Activated CD4-positive, alpha-beta memory T cell treated with anti-CD3 and anti-CD28 coated beads for 36 hours (primary cell): ENCODE measurements at regions of chr1 and their contacts with region 1.

Region 1: GRCh38 chr1:224458996-224459395 is 24.4 kb upstream of the WDR26 start:
- DNase-seq: no peak
- H3K4me3 Mint-ChIP-seq: no peak overlapping the region
- H3K27ac Mint-ChIP-seq: no peak overlapping the region
- H3K4me1 Mint-ChIP-seq: peaks cover 12% of the 10 kb centered on the region
- H3K27me3 Mint-ChIP-seq: no peaks in the 10 kb centered on the region

Region 2: DNA sequence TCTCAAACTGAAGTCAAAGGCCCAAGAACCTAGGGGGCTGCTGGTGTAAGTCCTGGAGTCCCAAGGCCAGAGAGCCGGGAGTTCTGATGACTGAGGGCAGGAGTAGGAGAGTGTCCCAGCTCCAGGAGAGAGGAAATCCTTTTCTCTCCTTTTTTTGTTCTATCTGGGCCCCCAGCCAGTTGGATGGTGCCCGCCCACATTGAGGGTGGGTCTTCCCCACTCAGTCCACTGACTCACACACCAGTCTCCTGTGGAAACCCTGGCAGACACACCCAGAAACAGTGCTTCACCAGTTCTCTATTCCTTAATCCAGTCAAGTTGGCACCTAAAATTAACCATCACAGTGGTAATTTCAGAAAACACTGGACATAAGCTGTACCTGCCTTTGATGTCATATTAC is 11.7 kb before region 1 on chr1:
- CTCF ChIA-PET with region 1: interaction called, 17 read pairs
- POLR2A ChIA-PET with region 1: no interaction called
- intact Hi-C with region 1: no loop called
- DNase-seq: no peak
- H3K4me3 Mint-ChIP-seq: no peak overlapping the region
- H3K27ac Mint-ChIP-seq: no peak overlapping the region
- H3K4me1 Mint-ChIP-seq: peaks cover 7% of the 10 kb centered on the region
- H3K27me3 Mint-ChIP-seq: no peaks in the 10 kb centered on the region